ENCODE measurements at regions of chr2 and their contacts with region 1.

Region 1: DNA sequence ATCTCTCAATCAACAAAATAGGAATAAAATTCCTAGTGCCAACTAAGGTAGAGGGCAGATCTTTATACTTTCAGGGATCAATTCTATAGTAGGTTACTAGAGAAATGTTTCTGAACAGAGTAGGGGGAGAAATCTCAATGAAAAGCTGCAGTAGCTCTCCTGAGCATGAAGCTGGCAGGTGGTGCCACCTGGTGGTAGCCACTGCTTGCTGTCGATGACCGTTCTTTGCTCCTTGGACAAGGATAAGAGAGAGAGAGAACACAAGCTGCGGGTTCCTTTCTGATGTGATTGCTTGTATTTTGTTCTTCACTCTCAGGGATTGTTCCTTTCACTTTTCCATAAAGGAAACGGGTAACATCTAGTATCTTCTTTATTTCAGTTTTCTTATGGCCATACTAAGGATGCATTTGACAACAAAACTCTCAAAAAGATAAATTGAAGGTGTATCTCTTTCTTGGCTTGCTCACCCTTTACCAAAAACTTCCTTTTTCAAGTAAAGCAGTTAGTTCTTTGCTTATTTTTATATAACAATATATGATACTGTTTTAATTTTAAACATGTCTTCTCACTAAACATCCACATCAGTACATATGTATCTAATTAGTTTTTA is 18.6 kb upstream of the MRPL19 start:
- DNase-seq: peak; percentile 64
- H3K4me3 ChIP-seq: peak overlapping the region in 1 of 2 experiments; percentile 53; a peak in 1 of 4 replicates
- H3K27ac ChIP-seq: no peak overlapping the region
- H3K4me1 ChIP-seq: peaks cover 5 to 8% of the 10 kb centered on the region in 2 experiments
- H3K27me3 ChIP-seq: no peaks in the 10 kb centered on the region
- CTCF ChIP-seq: peak; percentile 97
- EP300 ChIP-seq: no peak
- RAD21 ChIP-seq: peak; percentile 87

Region 2: GRCh38 chr2:74304332-74305148 is 1323.5 kb before region 1 on chr2:
- CTCF ChIA-PET with region 1: no interaction called
- POLR2A ChIA-PET with region 1: no interaction called
- DNase-seq: no peak
- H3K4me3 ChIP-seq: no peak overlapping the region; a peak in 1 of 4 replicates
- H3K27ac ChIP-seq: no peak overlapping the region
- H3K4me1 ChIP-seq: no peaks in the 10 kb centered on the region; a peak in 1 of 4 replicates
- H3K27me3 ChIP-seq: no peaks in the 10 kb centered on the region
- CTCF ChIP-seq: no peak
- EP300 ChIP-seq: no peak
- RAD21 ChIP-seq: no peak

Region 3: GRCh38 chr2:75459565-75460310 is 168.3 kb before region 1 on chr2:
- CTCF ChIA-PET with region 1: interaction called, 87 read pairs
- POLR2A ChIA-PET with region 1: no interaction called
- DNase-seq: no peak
- H3K4me3 ChIP-seq: no peak overlapping the region
- H3K27ac ChIP-seq: no peak overlapping the region
- H3K4me1 ChIP-seq: no peaks in the 10 kb centered on the region; a peak in 1 of 4 replicates
- H3K27me3 ChIP-seq: no peaks in the 10 kb centered on the region
- CTCF ChIP-seq: no peak
- EP300 ChIP-seq: no peak
- RAD21 ChIP-seq: no peak

Region 4: DNA sequence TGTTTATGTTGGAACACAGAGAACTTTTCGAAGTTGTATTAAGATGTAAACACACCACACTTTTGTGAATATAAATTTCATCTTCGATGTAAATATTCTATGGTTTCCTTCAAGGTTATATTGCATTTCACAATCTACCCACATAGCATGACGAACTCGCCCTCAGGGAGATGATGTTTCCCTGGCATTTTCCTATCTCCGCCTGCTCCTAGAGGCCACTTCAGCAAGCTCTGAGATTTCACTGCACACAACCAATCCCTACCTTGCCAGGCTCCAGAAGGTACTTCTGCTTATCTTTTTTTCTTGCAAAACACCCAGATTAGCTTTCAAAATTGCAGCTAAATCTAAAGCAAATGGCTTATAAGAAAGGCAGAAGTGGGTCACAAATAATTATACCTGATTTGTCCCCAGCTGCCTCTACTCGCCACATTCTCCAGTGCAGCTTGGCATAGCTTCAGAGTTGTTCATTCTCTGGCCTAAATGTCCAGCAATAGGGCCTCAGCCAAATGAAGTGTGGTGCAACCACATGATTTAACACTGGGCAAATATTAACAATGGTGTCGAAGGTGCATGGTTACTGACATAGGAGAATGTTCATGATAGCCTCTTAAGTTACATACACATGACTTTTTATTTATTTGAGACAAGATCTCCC is 13.8 kb before region 1 on chr2:
- CTCF ChIA-PET with region 1: interaction called, 29 read pairs
- POLR2A ChIA-PET with region 1: no interaction called
- DNase-seq: no peak
- H3K4me3 ChIP-seq: no peak overlapping the region
- H3K27ac ChIP-seq: no peak overlapping the region
- H3K4me1 ChIP-seq: no peaks in the 10 kb centered on the region
- H3K27me3 ChIP-seq: no peaks in the 10 kb centered on the region
- CTCF ChIP-seq: no peak
- EP300 ChIP-seq: no peak
- RAD21 ChIP-seq: no peak

Region 5: DNA sequence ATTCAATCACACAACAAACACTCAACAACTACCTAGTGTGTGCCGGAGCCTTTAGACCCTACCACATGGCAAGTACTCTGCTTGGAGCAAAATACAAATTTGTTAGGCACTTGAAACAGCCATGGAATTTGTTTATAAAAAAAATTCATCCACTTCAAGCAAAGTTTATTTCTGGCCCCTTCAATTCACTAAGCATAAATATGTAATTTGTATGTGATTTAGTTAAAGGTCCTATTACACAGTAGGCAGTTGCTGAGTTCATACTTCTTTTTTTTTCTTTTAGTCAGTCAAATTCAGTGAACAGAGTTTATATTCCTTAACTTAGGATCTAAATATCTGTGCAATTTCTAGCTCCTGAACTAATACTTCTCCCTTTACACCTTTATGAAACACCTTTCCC is 60.2 kb after region 1 on chr2:
- CTCF ChIA-PET with region 1: no interaction called
- POLR2A ChIA-PET with region 1: no interaction called
- DNase-seq: no peak
- H3K4me3 ChIP-seq: no peak overlapping the region
- H3K27ac ChIP-seq: no peak overlapping the region
- H3K4me1 ChIP-seq: no peaks in the 10 kb centered on the region
- H3K27me3 ChIP-seq: no peaks in the 10 kb centered on the region
- CTCF ChIP-seq: no peak
- EP300 ChIP-seq: no peak
- RAD21 ChIP-seq: no peak

Region 6: DNA sequence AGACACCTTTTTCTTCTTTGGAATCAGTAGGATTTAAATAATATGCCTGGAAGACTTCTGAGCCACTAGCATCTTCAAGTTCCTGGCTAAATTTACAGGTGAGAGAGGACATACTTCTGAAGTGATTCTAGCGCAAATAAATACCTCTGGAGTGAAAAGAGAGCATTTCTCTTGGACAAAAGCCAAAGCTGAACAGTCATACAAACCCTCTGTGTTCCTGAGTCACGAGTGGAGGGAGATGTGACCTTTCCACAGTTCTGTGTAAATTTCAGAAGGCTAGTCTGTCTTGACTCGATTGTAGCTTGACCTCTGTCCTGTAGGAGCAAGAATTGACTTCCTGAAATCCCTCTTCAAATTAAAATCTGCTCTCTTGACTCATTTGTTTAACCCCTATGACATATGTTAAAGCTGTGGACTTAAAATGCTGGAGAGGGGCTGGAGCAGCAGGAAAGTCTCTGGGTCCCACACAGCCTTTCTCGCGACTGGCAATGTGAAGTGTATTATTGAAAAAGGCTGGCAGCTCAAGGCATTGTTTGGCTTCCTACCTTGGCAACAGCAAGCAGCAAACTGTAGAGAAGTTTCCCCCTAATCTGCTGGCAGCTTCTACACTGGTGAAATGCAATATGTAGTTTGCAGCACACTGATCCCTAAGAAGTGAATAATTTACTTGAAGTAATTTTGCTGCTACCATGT is 162.3 kb after region 1 on chr2:
- CTCF ChIA-PET with region 1: no interaction called
- POLR2A ChIA-PET with region 1: no interaction called
- DNase-seq: no peak
- H3K4me3 ChIP-seq: no peak overlapping the region
- H3K27ac ChIP-seq: peak overlapping the region in 1 of 2 experiments; percentile 87; a peak in 1 of 4 replicates
- H3K4me1 ChIP-seq: peaks cover 0 to 18% of the 10 kb centered on the region in 2 experiments; a peak in 2 of 4 replicates
- H3K27me3 ChIP-seq: no peaks in the 10 kb centered on the region
- CTCF ChIP-seq: no peak
- EP300 ChIP-seq: no peak
- RAD21 ChIP-seq: no peak